Activated CD4-positive, alpha-beta T cell treated with anti-CD3 and anti-CD28 coated beads for 36 hours (primary cell): ENCODE measurements at regions of chrX and their contacts with region 1.

Region 1: DNA sequence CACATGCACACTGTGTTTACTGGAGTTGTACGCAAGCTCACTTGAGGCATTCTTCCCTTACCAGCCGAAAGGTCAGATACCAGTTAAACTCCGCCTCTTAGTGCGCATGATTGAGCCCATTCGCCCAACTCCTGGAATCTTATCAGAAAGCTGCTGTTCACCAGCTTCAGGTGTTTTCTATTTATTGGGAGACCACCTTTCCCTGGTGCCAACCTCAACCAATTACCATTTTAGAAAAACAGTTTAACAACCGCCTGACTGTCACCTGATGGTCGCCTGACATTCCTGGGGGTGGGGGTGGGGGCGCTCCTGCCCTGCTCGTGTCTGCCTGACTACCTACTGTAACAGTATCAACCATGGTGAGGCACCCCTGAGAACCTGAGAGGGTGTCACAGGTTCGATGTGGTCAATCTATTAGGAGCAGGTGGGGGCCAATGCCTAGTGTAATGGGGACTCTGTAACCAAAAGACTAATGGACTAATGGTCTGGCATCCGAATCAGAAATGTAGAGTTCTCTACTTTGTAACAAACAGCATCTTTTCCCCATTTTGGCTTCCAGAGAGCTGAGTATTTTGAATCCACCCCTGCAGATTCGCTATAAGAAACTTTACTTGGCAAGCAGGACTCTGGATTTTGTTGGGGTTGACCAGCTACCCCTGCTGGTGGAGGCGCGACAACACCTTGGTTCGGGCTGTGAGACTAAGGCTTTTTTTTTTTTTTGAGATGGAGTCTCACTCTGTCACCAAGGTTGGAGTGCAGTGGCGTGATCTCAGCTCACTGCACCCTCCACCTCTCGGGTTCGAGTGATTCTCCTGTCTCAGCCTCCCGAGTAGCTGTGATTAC is 58.2 kb upstream of the ZNF157 start:
- DNase-seq: peak; percentile 74
- ATAC-seq: peak; percentile 98
- H3K4me3 Mint-ChIP-seq: no peak overlapping the region
- H3K27ac Mint-ChIP-seq: no peak overlapping the region
- H3K4me1 Mint-ChIP-seq: peaks cover 3% of the 10 kb centered on the region
- H3K27me3 Mint-ChIP-seq: no peaks in the 10 kb centered on the region

Region 2: DNA sequence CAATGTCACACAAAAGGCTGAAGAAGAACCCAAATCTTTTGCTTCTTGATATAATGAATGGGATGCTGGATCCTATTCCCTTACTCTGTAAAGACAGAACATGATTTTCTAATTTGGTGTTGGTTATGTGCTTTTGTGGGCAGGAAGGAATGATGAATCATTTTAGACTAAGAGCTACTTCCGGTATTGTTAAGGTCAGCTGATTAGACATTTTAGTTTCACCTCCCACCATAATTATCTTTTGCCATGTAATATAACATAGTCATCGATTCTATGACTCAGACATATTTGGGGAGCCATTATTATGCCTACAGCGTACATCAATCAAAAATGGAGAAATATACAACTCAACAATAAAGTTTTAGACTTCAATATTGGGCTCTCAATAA is 1032.2 kb before region 1 on chrX:
- CTCF ChIA-PET with region 1: no interaction called
- POLR2A ChIA-PET with region 1: no interaction called
- intact Hi-C with region 1: no loop called
- DNase-seq: no peak
- ATAC-seq: peak; percentile 60
- H3K4me3 Mint-ChIP-seq: no peak overlapping the region
- H3K27ac Mint-ChIP-seq: no peak overlapping the region
- H3K4me1 Mint-ChIP-seq: peaks cover 26% of the 10 kb centered on the region
- H3K27me3 Mint-ChIP-seq: no peaks in the 10 kb centered on the region

Region 3: DNA sequence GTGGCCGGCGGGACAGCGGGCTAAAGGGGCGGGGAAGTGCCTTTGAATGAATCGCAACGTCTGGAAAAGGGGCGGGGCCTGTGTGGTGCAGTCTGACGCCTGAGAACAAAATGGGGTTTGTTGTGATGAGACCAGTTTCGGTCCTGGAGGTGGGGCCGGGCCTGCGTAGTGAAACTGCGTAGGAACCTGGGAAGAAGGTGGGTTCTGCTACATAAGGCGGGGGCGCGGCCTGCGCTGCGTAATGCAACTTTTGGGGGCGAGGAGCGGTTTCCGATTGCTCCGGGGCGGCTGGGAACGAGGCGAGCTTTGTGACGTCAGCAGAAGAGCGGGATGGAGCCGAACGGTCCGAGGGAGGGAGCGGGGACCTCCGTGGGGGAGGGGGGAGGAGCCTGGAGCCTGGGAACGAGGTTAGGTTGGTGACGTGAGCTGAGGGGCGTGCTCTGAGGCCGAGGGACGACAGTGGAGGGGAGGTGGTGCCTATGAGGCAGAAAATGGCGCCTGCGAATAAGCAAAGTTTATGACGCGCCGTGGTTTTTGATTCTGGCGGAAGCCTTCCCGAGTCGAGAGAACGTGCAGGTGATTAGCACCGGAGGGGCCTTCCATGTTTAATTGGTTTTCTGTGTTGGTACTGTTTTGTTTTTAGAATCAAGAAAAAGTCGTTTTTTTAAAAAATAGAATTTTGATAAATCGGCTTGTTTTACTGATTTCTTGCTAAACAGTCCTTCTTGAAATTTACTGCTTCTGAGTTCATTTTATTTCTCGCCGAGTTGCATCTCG is 78.6 kb before region 1 on chrX:
- CTCF ChIA-PET with region 1: no interaction called
- POLR2A ChIA-PET with region 1: no interaction called
- intact Hi-C with region 1: loop called in 1 of 2 experiments (anchors 5 kb)
- DNase-seq: peak; percentile 96
- ATAC-seq: peak; percentile 89
- H3K4me3 Mint-ChIP-seq: peak overlapping the region; percentile 77
- H3K27ac Mint-ChIP-seq: peak overlapping the region; percentile 95
- H3K4me1 Mint-ChIP-seq: peaks cover 23% of the 10 kb centered on the region
- H3K27me3 Mint-ChIP-seq: no peaks in the 10 kb centered on the region